Heart left ventricle (tissue), 16 donors: ENCODE measurements at regions of chr12 and their contacts with region 1.

Region 1: DNA sequence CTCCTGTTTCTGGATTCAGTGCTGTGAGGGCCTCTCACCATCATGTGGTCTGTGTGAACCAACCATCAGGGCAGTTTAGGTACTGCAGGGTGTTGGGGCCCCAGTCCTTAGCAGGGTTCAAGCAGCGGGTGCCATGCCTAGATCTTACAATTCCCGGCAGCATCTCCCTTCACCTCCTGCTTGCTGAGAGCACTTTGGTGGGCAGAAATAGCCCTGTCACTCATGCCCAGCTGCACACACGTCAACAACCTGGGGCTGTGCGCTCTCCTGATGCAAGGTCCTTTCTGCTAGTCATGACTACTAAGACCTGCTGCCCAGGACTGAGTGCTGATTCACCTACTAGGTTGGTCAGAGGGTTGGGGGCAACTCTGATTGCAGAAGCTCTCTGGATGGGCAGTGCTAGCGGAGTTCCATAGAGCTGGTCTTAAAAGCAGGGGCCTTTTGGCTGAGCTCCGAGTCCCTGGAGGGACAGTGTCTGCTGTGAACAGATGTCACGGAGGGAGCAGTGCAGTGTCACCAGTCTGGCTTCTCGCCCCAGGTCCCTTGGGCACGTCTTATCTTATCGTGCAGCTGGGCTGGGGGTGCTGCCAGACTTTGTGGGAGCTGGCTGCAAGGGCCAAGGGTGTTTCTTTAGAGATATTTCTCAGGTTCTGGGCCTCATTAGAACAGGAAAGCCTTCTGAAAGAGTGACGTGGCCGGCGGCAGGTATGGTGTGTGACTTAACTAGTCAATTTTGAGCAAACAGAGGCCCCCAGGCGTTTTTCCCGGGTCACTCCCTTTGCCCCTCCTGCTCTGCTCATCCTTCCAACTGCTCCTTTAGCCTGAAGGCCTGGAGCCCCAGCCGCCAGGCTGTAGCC is 71.8 kb downstream of the NINJ2 start:
- DNase-seq: peak; percentile 86 to 97 (median 91)
- ATAC-seq: peak; percentile 91 to 93 (median 92)
- H3K4me3 ChIP-seq: peak overlapping the region in 1 of 12 donors; percentile 0
- H3K27ac ChIP-seq: peak overlapping the region; percentile 39 to 90 (median 86)
- H3K4me1 ChIP-seq: peaks cover 0 to 32% (median 20%) of the 10 kb centered on the region in 12 donors
- H3K27me3 ChIP-seq: no peaks in the 10 kb centered on the region
- CTCF ChIP-seq: peak in 8 of 12 donors; percentile 14 to 61 (median 30)
- POLR2A ChIP-seq: no peak

Region 2: GRCh38 chr12:607526-608001 is 16.2 kb after region 1 on chr12:
- intact Hi-C with region 1: loop called in 1 of 10 experiments (anchors 2 kb)
- DNase-seq: peak; percentile 82 to 88 (median 84)
- ATAC-seq: peak; percentile 63 to 91 (median 64)
- H3K4me3 ChIP-seq: no peak overlapping the region
- H3K27ac ChIP-seq: peak overlapping the region; percentile 65 to 82 (median 76)
- H3K4me1 ChIP-seq: peaks cover 6 to 82% (median 36%) of the 10 kb centered on the region in 12 donors
- H3K27me3 ChIP-seq: no peaks in the 10 kb centered on the region
- CTCF ChIP-seq: no peak
- POLR2A ChIP-seq: no peak

Region 3: DNA sequence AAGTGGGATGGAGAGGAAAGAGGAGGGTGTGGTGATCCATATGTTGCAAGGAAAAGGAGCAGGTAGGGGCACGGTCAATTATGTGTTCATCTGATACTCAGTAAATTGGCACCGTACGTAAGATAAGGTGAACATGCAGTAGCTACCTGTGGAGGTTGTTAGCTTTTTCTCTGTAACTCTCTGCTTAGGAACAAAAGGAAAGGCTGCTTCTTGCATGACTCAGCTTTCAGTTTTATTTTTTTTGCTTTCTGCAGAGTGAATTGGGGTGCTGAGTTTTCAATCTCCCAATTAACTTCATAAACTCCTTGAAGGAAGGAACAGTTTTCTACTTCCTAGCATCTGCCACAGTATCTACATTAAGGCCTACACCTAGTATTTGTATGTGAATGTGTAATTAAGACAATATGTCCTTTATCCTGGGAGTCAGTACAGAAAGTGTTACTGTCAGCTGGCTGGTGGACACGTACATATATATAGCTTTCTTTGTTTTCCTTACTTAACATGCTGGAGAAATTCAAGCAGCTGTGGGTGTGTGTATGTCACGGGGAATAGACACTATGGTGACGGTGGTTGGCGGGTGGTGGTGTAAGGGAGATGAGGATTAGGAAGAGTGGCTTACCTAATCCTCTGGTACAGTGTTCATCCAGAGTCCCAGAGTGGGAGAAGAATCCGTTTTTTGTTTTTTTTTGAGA is 120.9 kb after region 1 on chr12:
- intact Hi-C with region 1: loop called in 1 of 10 experiments (anchors 5 kb)
- DNase-seq: no peak
- ATAC-seq: no peak
- H3K4me3 ChIP-seq: no peak overlapping the region
- H3K27ac ChIP-seq: peak overlapping the region in 9 of 12 donors; percentile 10 to 89 (median 68)
- H3K4me1 ChIP-seq: peaks cover 0 to 25% (median 5%) of the 10 kb centered on the region in 12 donors
- H3K27me3 ChIP-seq: no peaks in the 10 kb centered on the region
- CTCF ChIP-seq: no peak
- POLR2A ChIP-seq: no peak